Sigmoid colon (tissue), 7 donors: ENCODE measurements at regions of chr1 and their contacts with region 1.

Region 1: GRCh38 chr1:160428655-160429054 is 28.3 kb downstream of the VANGL2 start:
- DNase-seq: no peak
- H3K4me3 ChIP-seq: no peak overlapping the region
- H3K27ac ChIP-seq: no peak overlapping the region
- H3K4me1 ChIP-seq: no peaks in the 10 kb centered on the region
- H3K27me3 ChIP-seq: no peaks in the 10 kb centered on the region
- CTCF ChIP-seq: peak in 2 of 4 experiments; percentile 38 to 44
- EP300 ChIP-seq: no peak
- POLR2A ChIP-seq: no peak

Region 2: DNA sequence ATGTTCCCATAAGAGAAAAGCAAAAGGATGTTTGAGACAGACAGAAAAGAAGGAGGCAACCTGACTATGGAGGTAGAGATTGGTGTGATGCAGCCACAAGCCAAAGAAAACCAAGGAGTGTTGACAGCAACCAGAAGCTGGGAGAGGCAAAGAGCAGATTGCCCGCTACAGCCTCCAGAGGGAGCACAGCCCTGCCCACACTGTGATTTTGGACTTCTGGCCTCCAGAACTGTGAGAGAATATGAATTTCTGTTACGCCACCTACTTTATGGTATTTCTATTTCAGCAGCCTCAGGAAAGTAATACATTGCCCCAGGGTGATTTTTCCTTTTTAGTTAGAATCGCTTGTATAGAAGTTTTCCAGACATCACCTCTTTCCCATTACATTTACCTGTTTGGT is 66.0 kb after region 1 on chr1:
- intact Hi-C with region 1: no loop called
- DNase-seq: no peak
- H3K4me3 ChIP-seq: no peak overlapping the region
- H3K27ac ChIP-seq: no peak overlapping the region
- H3K4me1 ChIP-seq: no peaks in the 10 kb centered on the region
- H3K27me3 ChIP-seq: no peaks in the 10 kb centered on the region
- CTCF ChIP-seq: no peak
- EP300 ChIP-seq: no peak
- POLR2A ChIP-seq: no peak

Region 3: DNA sequence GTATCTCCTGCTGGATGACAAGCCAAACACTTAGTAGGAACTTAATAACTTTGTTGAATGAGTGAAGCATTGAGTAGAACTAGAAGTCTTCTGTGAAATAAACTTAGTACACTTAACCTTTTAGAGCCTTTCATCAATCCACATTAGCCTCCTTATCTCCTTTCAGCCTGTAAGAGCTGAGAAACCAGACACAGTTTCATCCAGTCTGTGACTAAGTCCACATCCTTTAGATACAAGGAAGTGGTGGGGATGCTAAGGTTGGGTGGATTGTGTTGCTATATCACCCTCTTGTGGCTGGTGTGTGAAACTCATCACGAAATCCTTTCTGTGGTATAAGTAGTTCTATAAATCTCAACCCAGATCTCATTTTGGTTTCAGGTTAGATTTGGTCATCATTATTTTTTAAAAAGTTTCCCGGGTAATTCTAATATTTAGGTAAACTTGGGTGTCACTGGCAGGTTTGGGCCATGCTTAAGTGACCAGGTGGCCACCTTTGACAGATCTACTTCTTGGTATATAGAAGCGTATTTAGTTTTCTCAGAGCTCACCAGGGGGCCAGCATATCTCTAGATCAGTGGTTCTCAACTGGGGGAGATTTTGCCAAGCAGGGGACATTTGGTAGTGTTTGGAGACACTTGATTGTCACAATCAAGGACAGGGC is 178.5 kb after region 1 on chr1:
- intact Hi-C with region 1: loop called (anchors 5 kb)
- DNase-seq: no peak
- H3K4me3 ChIP-seq: no peak overlapping the region
- H3K27ac ChIP-seq: no peak overlapping the region
- H3K4me1 ChIP-seq: no peaks in the 10 kb centered on the region
- H3K27me3 ChIP-seq: no peaks in the 10 kb centered on the region
- CTCF ChIP-seq: peak in 3 of 4 experiments; percentile 24 to 51 (median 39)
- EP300 ChIP-seq: no peak
- POLR2A ChIP-seq: no peak